Activated naive CD4-positive, alpha-beta T cell treated with anti-CD3 and anti-CD28 coated beads for 36 hours (primary cell): ENCODE measurements at regions of chr13 and their contacts with region 1.

Region 1: DNA sequence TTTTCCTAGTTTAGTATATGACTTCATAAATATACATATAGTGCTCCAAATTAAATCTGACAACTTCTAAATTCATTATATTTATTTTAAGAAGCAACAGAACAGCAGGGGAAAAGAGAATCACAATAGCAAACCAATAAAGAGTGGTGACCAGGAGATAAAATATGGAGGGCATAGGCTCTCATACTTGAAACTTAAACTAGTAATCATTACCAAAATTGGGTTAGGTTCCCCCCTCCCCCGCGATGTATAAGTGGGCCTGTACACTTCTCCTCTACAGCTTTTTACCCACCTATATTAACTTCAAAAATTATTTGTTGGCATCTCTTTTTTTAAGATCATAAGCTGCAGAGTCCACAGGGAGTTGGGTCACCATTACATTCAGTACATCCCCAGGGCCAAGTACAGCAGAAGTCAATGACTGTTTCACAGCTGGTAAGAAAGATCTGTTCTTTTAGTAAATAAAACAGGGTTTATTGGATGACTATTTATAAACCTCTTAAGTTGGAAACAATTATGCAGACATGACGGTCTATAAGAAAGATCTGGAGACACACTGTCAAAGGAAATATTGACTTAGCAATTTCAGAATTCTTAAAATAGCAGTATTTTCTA is 29.4 kb downstream of the KLF12 start:
- DNase-seq: no peak
- H3K4me3 Mint-ChIP-seq: no peak overlapping the region
- H3K27ac Mint-ChIP-seq: peak overlapping the region; percentile 33
- H3K4me1 Mint-ChIP-seq: peaks cover 65% of the 10 kb centered on the region
- H3K27me3 Mint-ChIP-seq: no peaks in the 10 kb centered on the region

Region 2: DNA sequence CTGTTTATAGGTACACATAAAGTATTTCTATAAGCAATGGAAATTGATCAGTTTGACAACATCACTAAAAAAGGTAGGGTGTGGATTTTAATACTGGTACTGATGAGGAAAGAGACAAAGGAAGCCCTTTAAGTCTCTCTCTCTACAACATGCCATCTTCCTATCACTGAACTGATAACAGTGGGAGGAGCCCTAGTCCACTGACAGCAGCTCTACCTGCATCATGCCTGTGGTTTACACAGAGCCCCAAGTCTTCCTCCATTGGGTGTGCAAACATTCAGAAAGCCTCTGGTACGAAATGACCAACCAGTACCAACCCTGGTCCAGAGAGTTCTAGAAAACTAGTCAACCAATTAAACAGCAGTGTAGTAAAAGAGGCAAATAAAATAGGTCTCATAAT is 24.0 kb before region 1 on chr13:
- CTCF ChIA-PET with region 1: no interaction called
- intact Hi-C with region 1: no loop called
- DNase-seq: no peak
- H3K4me3 Mint-ChIP-seq: no peak overlapping the region
- H3K27ac Mint-ChIP-seq: no peak overlapping the region
- H3K4me1 Mint-ChIP-seq: peaks cover 61% of the 10 kb centered on the region
- H3K27me3 Mint-ChIP-seq: no peaks in the 10 kb centered on the region

Region 3: DNA sequence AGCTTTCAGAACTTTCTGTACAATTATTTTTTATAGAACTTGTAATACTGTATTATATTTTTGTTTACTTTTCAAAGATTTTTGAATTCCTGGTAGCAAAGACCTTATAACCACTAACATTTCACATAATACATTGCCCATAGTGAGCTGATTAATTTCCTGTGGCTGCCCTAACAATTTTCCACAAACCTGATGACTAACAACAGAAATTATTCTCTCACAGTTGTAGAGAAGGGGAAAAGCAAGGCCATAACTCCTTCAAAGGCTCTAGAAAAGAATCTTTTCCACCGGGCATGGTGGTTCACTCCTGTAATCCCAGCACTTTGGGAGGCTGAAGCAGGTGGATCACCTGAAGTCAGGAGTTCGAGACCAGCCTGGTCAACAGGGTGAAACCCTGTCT is 10.4 kb after region 1 on chr13:
- CTCF ChIA-PET with region 1: interaction called, 4 read pairs
- intact Hi-C with region 1: loop called (anchors 1 kb)
- DNase-seq: no peak
- H3K4me3 Mint-ChIP-seq: no peak overlapping the region
- H3K27ac Mint-ChIP-seq: peak overlapping the region; percentile 41
- H3K4me1 Mint-ChIP-seq: peaks cover 75% of the 10 kb centered on the region
- H3K27me3 Mint-ChIP-seq: no peaks in the 10 kb centered on the region